ENCODE measurements at regions of chr15 and their contacts with region 1.

Region 1: GRCh38 chr15:28921919-28922706 is 36.3 kb downstream of the APBA2 start:
- DNase-seq: peak; percentile 12
- H3K4me3 Mint-ChIP-seq: no peak overlapping the region
- H3K27ac Mint-ChIP-seq: no peak overlapping the region
- H3K4me1 Mint-ChIP-seq: peaks cover 71% of the 10 kb centered on the region
- H3K27me3 Mint-ChIP-seq: no peaks in the 10 kb centered on the region

Region 2: DNA sequence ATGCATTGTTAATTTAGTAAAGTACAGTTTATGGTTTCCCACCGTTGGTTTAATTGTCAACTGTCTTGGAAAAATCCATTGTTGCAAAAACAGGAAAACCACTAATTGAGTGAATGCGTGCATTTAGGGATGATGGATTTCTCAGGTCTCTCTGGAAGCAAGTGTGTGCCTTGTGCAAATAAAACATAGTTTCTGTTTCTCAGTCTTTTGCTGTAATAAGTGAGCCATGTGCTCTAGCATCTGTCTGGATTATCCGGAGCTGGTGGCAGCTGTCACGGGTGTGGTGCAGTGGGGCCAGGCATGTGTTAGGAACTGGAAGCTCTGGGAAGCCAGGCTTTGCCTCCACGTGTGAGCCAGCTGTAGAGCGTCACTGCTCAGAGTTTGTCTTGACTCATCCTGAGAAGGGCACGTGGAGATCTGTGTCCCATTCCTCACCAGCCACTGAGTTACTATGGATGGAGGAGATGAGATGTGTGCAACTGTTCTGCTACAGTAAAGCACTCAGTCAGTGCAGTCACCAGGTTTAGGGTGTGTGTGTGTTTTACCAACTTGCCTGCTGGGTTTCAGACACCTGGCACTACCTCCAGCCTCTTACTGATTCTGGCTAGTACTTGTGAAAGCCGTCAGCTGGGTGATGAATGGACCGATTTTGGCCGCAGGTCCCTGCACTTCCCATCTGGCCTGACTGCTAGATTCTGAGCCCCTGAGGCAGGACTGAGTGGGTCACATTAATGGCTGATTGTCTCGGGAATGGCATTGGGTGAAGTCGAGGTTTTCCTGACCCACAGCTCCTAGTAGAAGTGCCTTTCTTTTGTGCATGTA is 29.1 kb before region 1 on chr15:
- CTCF ChIA-PET with region 1: interaction called, 3 read pairs
- intact Hi-C with region 1: loop called (anchors 1 kb)
- DNase-seq: no peak
- H3K4me3 Mint-ChIP-seq: no peak overlapping the region
- H3K27ac Mint-ChIP-seq: no peak overlapping the region
- H3K4me1 Mint-ChIP-seq: peaks cover 70% of the 10 kb centered on the region
- H3K27me3 Mint-ChIP-seq: no peaks in the 10 kb centered on the region